GM10248 (cell line): ENCODE measurements at regions of chr4 and their contacts with region 1.

Region 1: DNA sequence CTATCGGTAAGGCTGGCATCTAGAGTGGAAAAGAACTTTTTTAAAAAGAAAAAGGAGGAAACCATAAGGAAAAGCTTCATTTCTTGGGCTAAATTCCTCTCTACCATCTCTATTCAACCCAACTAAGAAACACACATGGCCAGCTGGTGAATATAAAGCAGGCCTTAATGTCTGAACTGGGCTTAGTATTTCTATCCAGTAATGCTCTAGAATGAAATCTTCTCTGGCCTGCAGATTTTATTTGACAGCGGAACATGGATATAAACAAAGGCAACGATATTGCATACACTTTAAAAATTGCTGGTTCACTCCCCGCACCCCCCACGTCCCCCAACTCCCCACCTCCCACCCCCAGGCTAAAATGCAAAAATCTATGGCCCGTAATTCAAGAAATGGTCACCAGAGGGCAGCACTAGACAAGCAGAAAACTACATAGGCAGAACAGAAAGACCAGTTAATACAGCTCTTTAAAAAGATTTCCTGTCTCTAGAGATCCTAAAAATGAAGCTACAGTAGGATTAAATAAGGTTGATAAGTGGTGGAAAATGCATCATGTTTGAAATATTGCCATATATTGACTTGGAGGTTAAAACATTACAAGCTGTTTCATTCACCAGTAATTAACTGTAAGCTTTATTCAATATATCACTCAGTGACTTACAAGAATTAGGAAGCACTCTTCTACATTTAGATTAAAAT is 155.2 kb upstream of the GALNT7 start:
- DNase-seq: peak; percentile 57
- CTCF ChIP-seq: peak; percentile 65

Region 2: GRCh38 chr4:173025131-173025530 is 11.8 kb after region 1 on chr4:
- CTCF ChIA-PET with region 1: interaction called, 50 read pairs
- POLR2A ChIA-PET with region 1: no interaction called
- DNase-seq: peak; percentile 54
- CTCF ChIP-seq: peak; percentile 53

Region 3: GRCh38 chr4:173264684-173265185 is 251.4 kb after region 1 on chr4:
- CTCF ChIA-PET with region 1: interaction called, 32 read pairs
- POLR2A ChIA-PET with region 1: interaction called, 4 read pairs
- DNase-seq: peak; percentile 17
- CTCF ChIP-seq: no peak

Region 4: GRCh38 chr4:173288296-173288695 is 274.9 kb after region 1 on chr4:
- CTCF ChIA-PET with region 1: interaction called, 14 read pairs
- POLR2A ChIA-PET with region 1: no interaction called
- DNase-seq: peak; percentile 38
- CTCF ChIP-seq: peak; percentile 50

Region 5: DNA sequence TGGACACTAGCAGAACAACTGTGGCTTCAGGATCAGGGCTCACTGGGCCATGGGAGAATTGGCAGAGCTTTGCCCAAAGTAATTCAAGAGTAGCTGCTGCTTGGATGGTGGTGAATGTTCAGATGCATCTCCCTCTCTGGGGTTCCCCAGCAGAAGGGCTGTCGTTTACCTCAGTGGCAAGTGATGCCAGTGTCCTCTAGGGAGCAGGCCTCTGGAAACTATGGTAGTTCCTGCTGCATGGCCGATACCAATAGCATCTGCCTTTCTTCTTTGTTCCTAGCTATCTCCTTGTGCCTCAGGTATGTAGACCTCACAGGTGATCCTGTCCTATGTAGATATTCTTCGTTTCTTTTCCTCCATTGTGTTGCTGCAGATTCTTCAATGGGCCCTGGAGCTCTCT is 294.4 kb after region 1 on chr4:
- CTCF ChIA-PET with region 1: interaction called, 20 read pairs
- POLR2A ChIA-PET with region 1: no interaction called
- DNase-seq: no peak
- CTCF ChIP-seq: no peak

Region 6: DNA sequence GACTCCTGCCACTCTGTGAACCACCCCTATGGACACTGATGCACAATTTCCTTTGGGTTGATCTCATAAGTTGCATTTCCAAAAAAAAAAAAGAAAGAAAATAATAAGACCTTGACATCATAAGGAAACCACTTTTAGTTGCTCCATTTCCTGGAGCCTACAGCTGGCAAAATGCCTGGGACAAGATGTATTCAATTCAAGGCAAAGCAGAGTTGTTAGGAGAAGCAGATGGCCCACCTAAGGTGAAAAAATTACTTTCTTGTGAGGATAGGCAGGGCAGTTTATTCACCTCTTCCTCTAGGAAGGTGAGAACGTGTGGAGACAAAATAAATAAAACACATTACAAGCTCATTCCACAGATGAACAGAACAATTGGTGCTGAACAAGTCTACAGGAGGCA is 399.7 kb after region 1 on chr4:
- CTCF ChIA-PET with region 1: interaction called, 20 read pairs
- POLR2A ChIA-PET with region 1: no interaction called
- DNase-seq: no peak
- CTCF ChIP-seq: no peak